ENCODE measurements at regions of chr17 and their contacts with region 1.

Region 1: GRCh38 chr17:41894791-41895331 is 23.9 kb downstream of the ACLY start:
- DNase-seq: peak; percentile 67
- H3K4me3 ChIP-seq: no peak overlapping the region
- H3K27ac ChIP-seq: peak overlapping the region; percentile 88
- H3K27me3 ChIP-seq: no peaks in the 10 kb centered on the region
- CTCF ChIP-seq: no peak

Region 2: GRCh38 chr17:41786227-41787020 is 108.4 kb before region 1 on chr17 and contains the start of gene JUP:
- CTCF ChIA-PET with region 1: no interaction called
- POLR2A ChIA-PET with region 1: interaction called, 12 read pairs
- DNase-seq: peak; percentile 98
- H3K4me3 ChIP-seq: peak within 1 kb of the TSS; percentile 78
- H3K27ac ChIP-seq: no peak within 1 kb of the TSS
- H3K27me3 ChIP-seq: peaks cover 3% of the 10 kb centered on the region
- CTCF ChIP-seq: peak; percentile 30
- polyA plus RNA-seq, gene JUP: 13.5 and 25.7 TPM in 2 replicates

Region 3: DNA sequence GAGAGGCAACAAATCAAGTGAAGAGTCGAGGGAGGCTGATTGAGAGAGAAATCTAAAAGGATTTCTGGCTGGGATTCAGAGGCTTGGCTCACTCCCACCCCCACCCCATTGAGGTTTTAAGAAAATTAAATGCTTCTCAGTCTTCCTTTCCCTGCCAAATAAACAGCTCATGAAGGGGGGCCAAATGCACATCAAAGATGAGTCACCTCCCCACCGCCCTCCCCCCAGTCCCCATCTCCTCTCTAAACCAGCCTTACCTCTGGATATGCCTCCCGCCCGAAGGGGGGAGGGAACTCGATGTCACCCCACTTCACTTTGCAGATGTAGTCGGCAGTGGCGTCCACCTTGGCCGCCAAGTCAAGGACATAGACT is 12.3 kb after region 1 on chr17:
- CTCF ChIA-PET with region 1: no interaction called
- POLR2A ChIA-PET with region 1: interaction called, 15 read pairs
- DNase-seq: no peak
- H3K4me3 ChIP-seq: no peak overlapping the region
- H3K27ac ChIP-seq: peak overlapping the region; percentile 65
- H3K27me3 ChIP-seq: no peaks in the 10 kb centered on the region
- CTCF ChIP-seq: no peak

Region 4: DNA sequence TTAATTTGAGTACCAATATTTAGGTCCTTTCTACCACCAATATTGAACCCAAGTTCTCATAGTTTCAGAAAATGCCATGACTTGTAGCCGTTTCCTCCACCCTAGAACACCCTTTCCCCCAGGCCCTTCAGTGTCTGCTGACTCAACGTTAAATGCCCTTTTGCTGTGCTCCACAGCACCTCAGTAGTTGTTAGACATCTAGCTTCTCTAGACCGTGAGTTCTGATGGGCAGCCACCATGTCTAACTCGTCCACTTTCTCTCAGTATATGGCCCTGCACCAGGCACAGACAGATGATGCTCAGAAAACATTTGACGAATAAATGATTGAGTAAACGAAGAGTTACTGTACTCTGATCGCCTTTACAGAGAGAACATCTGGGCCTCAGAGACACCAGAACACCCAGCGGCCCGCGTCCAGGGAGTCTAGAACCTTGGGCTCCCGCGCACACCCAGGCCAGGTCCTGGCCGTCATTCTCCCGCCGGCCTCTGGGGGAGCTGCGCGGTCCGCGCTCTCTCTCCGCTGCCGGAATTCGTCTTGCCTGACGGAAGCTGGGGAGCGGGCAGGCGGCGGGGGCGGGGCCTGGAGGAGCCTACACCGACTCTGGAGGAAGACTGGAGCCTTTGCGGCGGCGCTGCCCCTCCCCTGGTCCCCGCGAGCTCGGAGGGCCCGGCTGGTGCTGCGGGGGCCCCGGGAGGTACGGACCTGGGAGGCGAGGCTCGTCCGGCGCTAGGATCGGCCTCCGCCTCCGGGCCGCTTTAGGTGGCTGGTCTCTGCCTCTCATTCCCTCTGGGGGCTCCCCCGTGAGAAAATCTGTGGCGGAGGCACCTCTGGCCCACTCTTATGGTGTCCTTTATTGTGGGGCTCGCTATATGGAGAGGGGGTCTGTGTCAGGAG is 124.9 kb after region 1 on chr17 and contains the start of gene NKIRAS2:
- CTCF ChIA-PET with region 1: no interaction called
- POLR2A ChIA-PET with region 1: no interaction called
- DNase-seq: peak; percentile 61
- H3K4me3 ChIP-seq: peak within 1 kb of the TSS; percentile 88
- H3K27ac ChIP-seq: peak within 1 kb of the TSS; percentile 61
- H3K27me3 ChIP-seq: no peaks in the 10 kb centered on the region
- CTCF ChIP-seq: peak; percentile 87
- polyA plus RNA-seq, gene NKIRAS2: 46.5 and 51.3 TPM in 2 replicates